ENCODE measurements at regions of chr4 and their contacts with region 1.

Region 1: GRCh38 chr4:83128240-83128929 is 13.9 kb upstream of the PLAC8 start:
- DNase-seq: peak in 2 of 3 donors; percentile 43 to 48
- ATAC-seq: peak; percentile 71
- H3K4me3 ChIP-seq: no peak overlapping the region
- H3K4me1 ChIP-seq: peaks cover 12% of the 10 kb centered on the region
- CTCF ChIP-seq: no peak

Region 2: GRCh38 chr4:83012687-83013419 is 115.5 kb before region 1 on chr4:
- intact Hi-C with region 1: no loop called
- DNase-seq: peak; percentile 96 to 99 (median 98)
- ATAC-seq: peak; percentile 95
- H3K4me3 ChIP-seq: peak overlapping the region; percentile 65
- H3K4me1 ChIP-seq: peaks cover 27% of the 10 kb centered on the region
- CTCF ChIP-seq: peak; percentile 73

Region 3: DNA sequence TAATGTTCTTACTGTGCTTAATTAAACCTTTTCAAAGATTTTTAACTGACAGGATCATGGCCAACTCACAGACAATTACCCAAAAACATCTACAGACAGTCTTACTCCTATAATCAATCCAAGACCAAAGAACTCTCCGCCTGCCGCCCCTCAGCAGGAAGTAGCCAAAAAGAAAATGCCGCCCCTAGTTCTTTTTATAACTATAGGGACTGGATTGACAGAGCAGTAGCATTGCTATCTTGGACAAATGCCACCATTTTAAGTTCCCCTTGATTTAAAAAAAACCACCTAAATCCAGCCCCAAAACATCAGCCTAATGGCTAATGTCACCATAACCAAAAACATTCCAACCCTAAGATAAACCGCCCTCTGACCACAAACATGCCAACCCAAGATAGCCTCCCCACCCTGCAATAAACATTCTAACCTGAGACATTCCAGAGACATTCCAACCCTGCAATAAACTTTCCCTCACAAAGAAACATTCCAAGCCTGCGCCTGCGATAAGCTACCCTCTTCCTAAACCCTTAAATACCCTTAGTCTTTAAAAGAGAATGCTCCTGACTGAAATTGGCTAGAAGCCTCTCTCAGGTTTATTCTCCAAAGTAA is 79.2 kb after region 1 on chr4:
- intact Hi-C with region 1: loop called in 1 of 2 experiments (anchors 5 kb)
- DNase-seq: peak in 1 of 3 donors; percentile 62
- ATAC-seq: peak; percentile 74
- H3K4me3 ChIP-seq: no peak overlapping the region
- H3K4me1 ChIP-seq: peaks cover 20% of the 10 kb centered on the region
- CTCF ChIP-seq: no peak

Region 4: GRCh38 chr4:83387753-83388676 is 259.6 kb after region 1 on chr4:
- intact Hi-C with region 1: no loop called
- DNase-seq: no peak
- ATAC-seq: no peak
- H3K4me3 ChIP-seq: no peak overlapping the region
- H3K4me1 ChIP-seq: no peaks in the 10 kb centered on the region
- CTCF ChIP-seq: no peak